Testis (tissue), 5 donors: ENCODE measurements at regions of chr10 and their contacts with region 1.

Region 1: GRCh38 chr10:7260412-7260900 is 150.4 kb downstream of the SFMBT2 start:
- DNase-seq: no peak
- H3K4me3 ChIP-seq: no peak overlapping the region
- H3K27ac ChIP-seq: no peak overlapping the region
- H3K4me1 ChIP-seq: peaks cover 5% of the 10 kb centered on the region
- H3K27me3 ChIP-seq: no peaks in the 10 kb centered on the region
- CTCF ChIP-seq: peak in 2 of 3 experiments; percentile 51 to 67
- POLR2A ChIP-seq: no peak

Region 2: GRCh38 chr10:7410862-7411670 is 150.6 kb after region 1 on chr10 and contains the start of gene SFMBT2:
- intact Hi-C with region 1: loop called (anchors 5 kb)
- DNase-seq: peak; percentile 70
- H3K4me3 ChIP-seq: peak within 1 kb of the TSS; percentile 71 to 80
- H3K27ac ChIP-seq: peak within 1 kb of the TSS; percentile 33 to 83
- H3K4me1 ChIP-seq: peaks cover 14% of the 10 kb centered on the region
- H3K27me3 ChIP-seq: no peaks in the 10 kb centered on the region
- CTCF ChIP-seq: no peak
- POLR2A ChIP-seq: no peak
- total RNA-seq, gene SFMBT2: 7.6 to 8.5 TPM